ENCODE measurements at regions of chr2 and their contacts with region 1.

Region 1: DNA sequence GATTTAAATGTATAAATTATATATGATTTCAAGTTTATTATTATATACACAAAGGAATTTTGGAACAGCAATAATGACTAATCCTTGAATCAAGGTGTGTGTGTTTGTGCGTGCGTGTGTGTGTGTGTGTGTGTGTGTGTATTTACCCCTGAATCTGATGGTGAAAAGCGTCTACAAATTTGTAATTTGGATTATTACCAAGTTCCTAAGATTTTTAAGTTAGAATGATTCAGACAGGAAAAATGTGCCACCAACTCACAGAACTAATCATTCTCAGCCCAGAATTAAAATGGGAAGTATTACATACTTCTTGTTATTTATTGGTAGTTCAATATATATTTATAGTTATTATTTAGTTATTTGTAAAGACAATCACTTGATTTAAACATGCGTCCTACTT is 12.3 kb downstream of the CALCRL start:
- DNase-seq: no peak
- ATAC-seq: no peak
- H3K4me3 ChIP-seq: no peak overlapping the region
- H3K27ac ChIP-seq: no peak overlapping the region
- H3K4me1 ChIP-seq: peaks cover 0 to 61% (median 8%) of the 10 kb centered on the region in 12 donors
- H3K27me3 ChIP-seq: no peaks in the 10 kb centered on the region
- CTCF ChIP-seq: no peak
- POLR2A ChIP-seq: no peak

Region 2: DNA sequence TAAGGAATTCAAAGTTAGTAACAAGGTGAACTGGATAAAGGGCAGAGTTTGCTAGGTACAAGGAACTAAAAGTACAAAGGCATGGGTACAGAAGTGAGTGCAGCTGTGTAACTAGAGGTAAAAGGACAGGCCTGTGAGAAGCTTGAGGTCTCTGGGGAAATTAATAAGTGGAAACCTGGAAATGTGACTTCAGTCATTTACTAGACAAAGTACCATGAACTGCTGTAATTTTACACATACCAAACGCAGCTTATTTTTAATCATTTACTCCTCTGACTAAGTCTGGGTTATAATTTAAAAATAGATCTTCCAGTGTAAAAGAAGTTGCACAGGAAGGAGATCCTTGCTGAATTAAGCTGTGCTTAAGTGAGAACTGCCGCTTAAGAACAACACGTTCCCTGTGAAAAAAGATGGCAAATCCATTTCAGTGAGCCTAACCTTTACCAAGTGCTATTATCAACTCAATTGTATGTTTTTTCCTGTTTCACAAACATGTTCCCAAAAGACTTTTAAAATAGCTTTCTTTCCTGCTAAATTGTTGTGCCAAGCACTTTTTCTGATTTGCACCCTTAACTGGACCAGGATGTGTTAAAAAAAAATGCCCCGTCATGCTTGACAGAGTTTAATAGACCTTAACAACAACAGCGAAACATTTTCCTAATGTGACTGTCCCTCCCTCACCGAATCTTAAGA is 32.0 kb before region 1 on chr2:
- intact Hi-C with region 1: loop called in 2 of 10 experiments (anchors 5 kb)
- DNase-seq: peak in 1 of 5 donors; percentile 19
- ATAC-seq: peak; percentile 79 to 92 (median 86)
- H3K4me3 ChIP-seq: peak overlapping the region in 7 of 12 donors; percentile 15 to 35 (median 27)
- H3K27ac ChIP-seq: peak overlapping the region; percentile 7 to 71 (median 54)
- H3K4me1 ChIP-seq: peaks cover 0 to 48% (median 13%) of the 10 kb centered on the region in 12 donors
- H3K27me3 ChIP-seq: no peaks in the 10 kb centered on the region
- CTCF ChIP-seq: no peak
- POLR2A ChIP-seq: no peak